Posterior vena cava (tissue), 2 donors: ENCODE measurements at regions of chr11 and their contacts with region 1.

Region 1: GRCh38 chr11:66686801-66687750 is 9.4 kb upstream of the RBM4B start:
- DNase-seq: peak; percentile 76

Region 2: GRCh38 chr11:66570117-66570819 is 116.8 kb before region 1 on chr11:
- intact Hi-C with region 1: loop called in 1 of 2 experiments (anchors 5 kb)
- DNase-seq: no peak

Region 3: DNA sequence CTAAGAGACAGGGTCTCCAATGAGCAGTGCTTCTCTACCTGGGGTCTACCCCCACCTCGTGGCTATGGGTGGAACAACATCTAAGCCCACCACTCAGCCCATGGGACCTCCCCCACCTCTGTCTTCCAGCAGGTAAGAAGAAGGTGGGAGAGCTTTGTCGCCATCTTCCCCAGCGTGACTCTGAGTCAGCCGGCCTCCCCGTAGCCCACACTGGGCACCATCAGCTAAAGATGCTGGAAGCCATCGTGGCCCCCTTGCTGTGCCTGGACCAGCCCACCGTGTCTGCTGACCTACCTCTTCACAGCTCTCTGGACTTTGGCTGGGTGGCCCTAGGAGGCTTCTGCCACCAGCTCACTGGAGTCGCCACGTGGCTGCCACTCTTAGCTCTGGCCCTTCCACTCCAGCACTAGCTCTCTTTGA is 289.0 kb after region 1 on chr11:
- intact Hi-C with region 1: no loop called
- DNase-seq: no peak

Region 4: GRCh38 chr11:67366961-67367760 is 680.1 kb after region 1 on chr11:
- intact Hi-C with region 1: no loop called
- DNase-seq: no peak